ENCODE measurements at regions of chr2 and their contacts with region 1.

Region 1: DNA sequence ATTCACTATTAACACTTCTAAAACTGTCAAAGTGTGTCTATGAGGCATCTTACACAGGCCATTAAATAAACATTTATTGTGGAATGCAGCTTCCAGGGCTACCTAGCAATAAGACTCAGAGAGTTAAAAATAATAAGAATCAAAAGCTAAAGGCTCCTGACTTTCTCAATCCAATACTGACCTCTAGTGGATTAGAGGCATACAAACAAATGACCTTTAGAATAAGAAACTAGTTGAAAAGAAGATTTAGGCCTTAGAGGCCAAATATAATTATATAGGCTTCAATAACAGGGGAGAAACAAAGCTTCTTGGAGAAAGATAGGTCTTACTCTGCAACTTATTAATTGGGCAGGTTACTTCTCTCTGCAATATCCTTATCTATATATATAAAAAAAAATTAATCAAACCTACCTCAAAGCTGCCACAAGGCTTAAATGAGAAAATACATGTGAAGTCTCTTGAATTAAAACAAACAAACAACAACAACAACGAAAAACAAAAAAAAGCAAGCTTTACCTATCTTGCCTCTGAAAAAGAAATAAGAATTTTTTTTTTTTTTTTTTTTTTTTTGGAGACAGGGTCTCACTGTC is 246.1 kb downstream of the EXOC6B start:
- DNase-seq: no peak
- ATAC-seq: peak; percentile 56

Region 2: DNA sequence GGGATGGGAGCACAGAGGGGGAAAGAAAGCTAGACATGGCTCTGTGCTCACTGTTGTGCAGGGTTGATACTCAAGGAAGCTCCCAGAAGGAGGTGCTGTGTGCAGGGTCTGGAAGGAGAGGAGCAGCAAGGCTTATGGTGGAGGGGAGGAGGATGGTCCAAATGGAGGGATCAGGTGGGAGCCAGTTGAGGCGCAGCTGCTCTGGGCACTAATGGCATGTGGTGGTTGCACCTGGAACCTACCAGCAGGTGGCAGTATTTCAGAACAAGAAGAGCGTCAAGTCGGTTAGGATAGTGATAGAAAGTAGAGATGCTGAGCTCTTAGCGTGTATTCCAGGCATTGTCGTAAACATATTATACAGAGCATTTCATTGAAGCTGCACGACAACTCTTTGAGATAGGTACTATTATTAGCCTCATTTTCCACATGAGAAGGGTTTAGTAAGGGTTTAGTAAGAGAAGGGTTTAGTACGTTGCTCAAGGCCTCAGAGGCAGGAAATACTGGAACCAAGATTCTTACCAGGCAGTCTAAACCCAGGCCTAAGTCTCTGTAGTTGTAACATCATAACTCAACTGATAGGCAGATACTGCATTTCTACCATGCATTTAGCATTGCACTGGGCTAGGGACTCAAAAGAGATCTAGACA is 655.7 kb before region 1 on chr2:
- intact Hi-C with region 1: loop called (anchors 10 kb)
- DNase-seq: peak; percentile 61
- ATAC-seq: peak; percentile 86

Region 3: DNA sequence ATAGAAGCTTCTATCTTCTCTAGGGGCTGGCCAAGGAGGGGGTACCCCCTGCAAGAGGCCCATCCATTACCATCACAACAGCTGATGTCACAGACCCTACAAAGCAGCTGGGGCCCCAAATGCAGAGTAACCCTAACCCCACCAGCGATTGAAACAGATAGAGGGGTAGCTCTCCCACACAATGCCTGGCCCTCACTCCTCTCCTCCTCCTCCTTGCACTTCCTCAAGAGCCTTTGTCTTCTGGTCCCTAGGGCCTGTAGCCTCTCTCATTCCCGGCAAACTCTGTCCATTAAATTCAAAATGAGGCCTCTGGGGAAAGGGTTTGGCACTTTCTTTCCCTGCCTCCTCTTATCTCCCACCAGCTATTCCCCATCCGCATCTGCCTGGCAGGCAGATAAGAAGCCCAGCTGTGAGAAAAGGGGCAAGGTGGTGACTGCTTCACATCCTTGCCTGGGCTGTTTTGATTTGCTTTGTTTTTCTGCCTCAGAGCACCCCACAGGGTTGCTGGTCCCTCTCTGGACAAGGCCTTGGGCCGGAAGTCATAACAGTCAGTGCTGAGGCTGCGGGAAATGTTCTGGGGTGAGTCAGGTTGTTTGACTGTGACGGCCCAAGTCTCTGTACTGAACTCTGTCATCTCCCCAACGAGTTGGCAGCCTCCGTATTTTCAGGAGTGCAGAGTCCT is 405.9 kb before region 1 on chr2:
- intact Hi-C with region 1: loop called (anchors 10 kb)
- DNase-seq: no peak
- ATAC-seq: no peak